Right ventricle myocardium inferior (tissue), 1 donor: ENCODE measurements at regions of chr7 and their contacts with region 1.

Region 1: GRCh38 chr7:158863611-158864506 is 7.5 kb downstream of the DYNC2I1 start:
- DNase-seq: peak; percentile 91
- ATAC-seq: peak; percentile 91

Region 2: DNA sequence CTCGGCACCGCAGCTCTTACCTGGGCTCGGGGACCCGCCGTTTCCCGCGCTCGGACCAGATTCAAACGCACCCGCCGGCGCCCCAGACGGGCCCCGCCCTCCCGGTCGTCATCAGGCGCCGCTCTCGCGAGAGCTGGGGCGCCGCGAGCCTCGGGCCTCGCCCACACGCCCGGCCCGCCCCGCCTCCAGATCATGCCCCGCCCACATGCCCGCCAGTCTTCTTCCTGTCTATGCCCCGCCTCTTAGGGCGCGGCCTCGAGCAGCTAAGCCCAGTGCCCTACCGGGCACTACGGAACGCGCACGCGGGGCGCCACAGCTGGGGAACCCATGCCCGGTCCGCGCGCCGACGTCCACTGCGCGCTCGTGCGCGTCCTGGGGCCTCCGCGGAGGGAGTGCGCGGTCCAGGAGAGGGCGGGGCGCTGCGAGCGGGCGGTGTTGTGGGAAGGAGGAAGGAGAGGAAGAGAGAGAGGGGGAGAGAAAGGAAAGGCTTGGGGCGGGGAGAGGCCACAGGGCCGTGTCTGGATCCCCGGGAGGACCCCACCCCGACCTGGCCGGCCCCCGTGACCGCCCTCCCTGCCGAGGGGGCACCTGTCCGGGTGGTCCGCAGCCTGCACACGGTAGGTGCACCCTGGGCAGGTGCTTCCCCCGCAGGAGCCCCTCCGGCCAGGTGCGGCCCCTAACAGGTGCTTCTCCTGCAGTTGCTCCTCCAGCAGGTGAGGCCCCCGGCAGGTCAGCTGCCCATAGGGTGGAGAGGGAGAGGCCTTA is 159.0 kb before region 1 on chr7 and contains the start of gene NCAPG2:
- intact Hi-C with region 1: loop called (anchors 10 kb)
- DNase-seq: peak; percentile 100
- ATAC-seq: peak; percentile 99
- total RNA-seq, gene NCAPG2: 6.4 TPM

Region 3: GRCh38 chr7:158782761-158783401 is 81.0 kb before region 1 on chr7:
- intact Hi-C with region 1: loop called (anchors 5 kb)
- DNase-seq: peak; percentile 74
- ATAC-seq: peak; percentile 91

Region 4: GRCh38 chr7:158818325-158819213 is 45.3 kb before region 1 on chr7:
- intact Hi-C with region 1: loop called (anchors 2 kb)
- DNase-seq: peak; percentile 92
- ATAC-seq: peak; percentile 90